ENCODE measurements at regions of chr3 and their contacts with region 1.

Region 1: DNA sequence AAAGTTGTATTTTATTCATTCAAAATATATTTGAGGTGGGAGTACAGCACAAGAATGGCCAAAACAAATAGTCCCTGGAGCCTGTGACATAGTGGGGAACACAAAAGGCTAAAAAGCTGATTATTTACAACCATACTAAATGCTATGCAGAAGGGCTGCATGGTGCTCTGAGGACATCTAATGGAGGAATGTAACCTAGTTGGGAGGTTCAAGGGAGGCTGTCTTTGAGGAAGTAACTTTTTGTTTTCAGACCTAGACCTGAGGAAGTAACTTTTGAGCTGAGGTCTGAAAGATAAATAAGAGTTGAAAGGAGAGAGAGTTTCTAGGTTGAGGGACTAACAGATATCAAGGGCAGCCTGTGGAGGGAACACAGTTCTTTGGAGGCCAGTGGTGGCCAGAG is 34.8 kb upstream of the RASA2 start:
- DNase-seq: peak; percentile 56
- H3K4me3 Mint-ChIP-seq: no peak overlapping the region
- H3K27ac Mint-ChIP-seq: no peak overlapping the region
- H3K4me1 Mint-ChIP-seq: peaks cover 29% of the 10 kb centered on the region
- H3K27me3 Mint-ChIP-seq: no peaks in the 10 kb centered on the region
- CTCF ChIP-seq: no peak

Region 2: GRCh38 chr3:141303481-141304223 is 148.4 kb before region 1 on chr3:
- CTCF ChIA-PET with region 1: interaction called, 19 read pairs
- intact Hi-C with region 1: loop called (anchors 1 kb)
- DNase-seq: peak; percentile 89
- H3K4me3 Mint-ChIP-seq: no peak overlapping the region
- H3K27ac Mint-ChIP-seq: no peak overlapping the region
- H3K4me1 Mint-ChIP-seq: peaks cover 7% of the 10 kb centered on the region
- H3K27me3 Mint-ChIP-seq: peaks cover 19% of the 10 kb centered on the region
- CTCF ChIP-seq: peak; percentile 82

Measured in Calu3 (cell line).